Heart right ventricle (tissue), 16 donors: ENCODE measurements at regions of chr15 and their contacts with region 1.

Region 1: GRCh38 chr15:62782039-62782791 is 260.3 kb upstream of the TPM1 start:
- DNase-seq: peak; percentile 50 to 93
- ATAC-seq: peak; percentile 89 to 95 (median 93)
- H3K4me3 ChIP-seq: no peak overlapping the region
- H3K27ac ChIP-seq: peak overlapping the region in 9 of 10 donors; percentile 23 to 80 (median 69)
- H3K4me1 ChIP-seq: peaks cover 11 to 62% (median 43%) of the 10 kb centered on the region in 9 donors
- H3K27me3 ChIP-seq: no peaks in the 10 kb centered on the region
- CTCF ChIP-seq: peak; percentile 55 to 84 (median 71)

Region 2: GRCh38 chr15:62841269-62841628 is 59.0 kb after region 1 on chr15:
- intact Hi-C with region 1: loop called in 6 of 10 experiments (anchors 2 to 10 kb)
- DNase-seq: no peak
- ATAC-seq: peak in 1 of 8 donors; percentile 34
- H3K4me3 ChIP-seq: peak overlapping the region in 1 of 10 donors; percentile 10
- H3K27ac ChIP-seq: peak overlapping the region in 9 of 10 donors; percentile 10 to 84 (median 74)
- H3K4me1 ChIP-seq: peaks cover 0 to 51% (median 11%) of the 10 kb centered on the region in 9 donors
- H3K27me3 ChIP-seq: no peaks in the 10 kb centered on the region
- CTCF ChIP-seq: no peak

Region 3: DNA sequence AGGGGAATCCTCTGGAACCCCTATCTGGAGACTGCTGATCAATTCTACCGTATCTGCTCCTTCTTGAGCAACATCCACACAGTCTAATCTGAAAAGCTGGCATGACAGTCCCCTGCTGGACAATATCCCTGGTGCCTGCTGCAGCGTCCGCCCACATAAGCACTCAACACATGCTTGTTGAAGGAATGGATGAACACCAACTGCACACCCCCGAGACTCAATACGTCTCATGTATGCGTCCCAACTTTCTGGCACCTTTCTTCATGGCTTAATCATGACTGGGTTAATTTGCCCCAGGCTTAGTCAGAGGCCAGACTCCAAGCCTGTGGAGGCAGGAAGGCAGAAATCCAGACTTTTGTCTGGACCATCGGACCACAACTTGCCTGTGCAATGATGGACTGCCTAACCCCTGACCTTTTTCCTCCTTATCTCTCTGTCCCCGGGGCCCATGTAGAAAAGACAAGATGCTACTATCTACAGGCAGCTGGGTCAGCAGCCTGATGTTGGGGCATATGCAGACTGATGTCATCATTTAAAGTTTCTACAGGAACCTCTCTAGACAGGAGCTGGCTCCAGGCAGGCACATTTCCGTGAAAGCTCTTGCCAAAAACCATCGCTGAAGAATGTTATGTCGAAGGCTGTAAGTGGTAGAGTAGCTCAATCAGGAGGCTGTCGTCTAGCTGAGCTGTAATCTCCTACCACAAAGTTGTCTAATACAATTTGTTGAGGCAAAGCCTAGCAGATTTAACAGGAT is 146.2 kb after region 1 on chr15:
- intact Hi-C with region 1: loop called in 1 of 10 experiments (anchors 10 kb)
- DNase-seq: peak in 1 of 2 donors; percentile 42
- ATAC-seq: peak; percentile 66 to 89 (median 84)
- H3K4me3 ChIP-seq: no peak overlapping the region
- H3K27ac ChIP-seq: peak overlapping the region in 7 of 10 donors; percentile 11 to 58 (median 45)
- H3K4me1 ChIP-seq: peaks cover 3 to 51% (median 17%) of the 10 kb centered on the region in 9 donors
- H3K27me3 ChIP-seq: no peaks in the 10 kb centered on the region
- CTCF ChIP-seq: peak in 7 of 9 donors; percentile 11 to 38 (median 27)

Region 4: DNA sequence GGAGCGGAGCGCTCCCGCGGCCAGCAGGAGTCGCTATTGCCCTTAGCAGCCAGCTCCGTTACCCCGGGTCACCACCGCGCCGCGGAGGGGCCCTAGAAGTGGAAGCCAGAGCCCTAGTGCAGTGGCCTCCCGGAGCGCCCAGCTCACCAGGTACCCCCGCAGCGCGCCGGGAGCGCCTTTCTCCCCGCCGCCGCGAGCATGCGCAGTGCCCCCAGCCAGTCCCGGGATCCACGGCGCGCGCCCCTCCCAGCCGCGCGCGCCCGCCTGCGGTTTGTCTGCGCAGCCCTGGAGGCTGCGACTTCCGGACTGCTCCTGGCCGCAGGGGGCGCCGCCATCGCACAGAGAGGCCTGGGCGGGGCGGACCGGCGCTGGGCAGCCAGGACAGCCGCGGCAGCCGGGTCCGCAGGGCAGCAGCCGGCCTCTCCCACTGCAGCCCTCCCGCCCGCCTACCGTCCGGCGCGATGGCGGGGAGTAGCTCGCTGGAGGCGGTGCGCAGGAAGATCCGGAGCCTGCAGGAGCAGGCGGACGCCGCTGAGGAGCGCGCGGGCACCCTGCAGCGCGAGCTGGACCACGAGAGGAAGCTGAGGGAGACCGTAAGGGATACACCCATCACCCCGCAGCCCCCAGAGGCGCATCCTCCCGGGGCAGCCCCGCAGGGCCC is 266.0 kb after region 1 on chr15:
- intact Hi-C with region 1: loop called in 6 of 10 experiments (anchors 2 to 10 kb)
- DNase-seq: peak; percentile 87 to 92
- ATAC-seq: peak; percentile 49 to 88 (median 78)
- H3K4me3 ChIP-seq: peak overlapping the region; percentile 66 to 92 (median 81)
- H3K27ac ChIP-seq: peak overlapping the region; percentile 88 to 99 (median 96)
- H3K4me1 ChIP-seq: peaks cover 19 to 76% (median 59%) of the 10 kb centered on the region in 9 donors
- H3K27me3 ChIP-seq: peaks cover 0 to 41% (median 0%) of the 10 kb centered on the region in 7 donors
- CTCF ChIP-seq: peak; percentile 84 to 95 (median 92)

Region 5: GRCh38 chr15:63277038-63277892 is 495.1 kb after region 1 on chr15 and contains the start of gene APH1B:
- intact Hi-C with region 1: loop called in 1 of 10 experiments (anchors 10 kb)
- DNase-seq: peak; percentile 80 to 90
- ATAC-seq: peak; percentile 87 to 98 (median 92)
- H3K4me3 ChIP-seq: peak within 1 kb of the TSS; percentile 68 to 93 (median 84)
- H3K27ac ChIP-seq: peak within 1 kb of the TSS; percentile 22 to 92 (median 86)
- H3K4me1 ChIP-seq: peaks cover 0 to 31% (median 9%) of the 10 kb centered on the region in 9 donors
- H3K27me3 ChIP-seq: no peaks in the 10 kb centered on the region
- CTCF ChIP-seq: no peak
- total RNA-seq, gene APH1B: 4.8 to 11.4 (median 8.4) TPM